B cell (primary cell): ENCODE measurements at regions of chr16 and their contacts with region 1.

Region 1: DNA sequence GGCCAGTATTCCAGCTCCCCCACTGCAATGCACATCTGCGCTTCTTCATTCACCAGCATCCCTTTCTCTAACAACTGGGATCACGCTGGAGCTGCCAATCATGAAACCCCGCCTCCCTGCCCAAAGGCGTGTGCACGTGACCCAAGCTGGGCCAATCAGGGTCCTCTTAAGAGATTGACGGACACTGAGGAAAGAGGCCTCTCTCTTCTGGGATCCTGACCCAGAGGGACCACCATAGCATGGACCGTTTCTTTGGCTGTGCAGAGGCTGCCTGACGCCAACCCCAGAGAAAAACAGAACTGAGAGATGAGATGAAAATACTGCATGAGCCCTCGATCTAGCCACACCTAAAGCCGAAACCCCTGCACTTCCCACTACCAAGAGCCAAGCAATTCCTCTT is 32.0 kb downstream of the COTL1 start:
- DNase-seq: peak; percentile 73
- ATAC-seq: peak; percentile 84
- H3K4me3 ChIP-seq: peak overlapping the region in 3 of 5 experiments; percentile 20 to 43 (median 40)
- H3K4me3 Mint-ChIP-seq: peak overlapping the region; percentile 78
- H3K27ac ChIP-seq: peak overlapping the region; percentile 37 to 41
- H3K27ac Mint-ChIP-seq: peak overlapping the region; percentile 88
- H3K4me1 ChIP-seq: peaks cover 30 to 63% of the 10 kb centered on the region in 2 donors
- H3K4me1 Mint-ChIP-seq: peaks cover 56% of the 10 kb centered on the region
- H3K27me3 ChIP-seq: no peaks in the 10 kb centered on the region
- H3K27me3 Mint-ChIP-seq: no peaks in the 10 kb centered on the region
- CTCF ChIP-seq: no peak

Region 2: GRCh38 chr16:84220851-84221250 is 365.0 kb before region 1 on chr16:
- CTCF ChIA-PET with region 1: no interaction called
- POLR2A ChIA-PET with region 1: no interaction called
- intact Hi-C with region 1: no loop called
- DNase-seq: no peak
- ATAC-seq: no peak
- H3K4me3 ChIP-seq: no peak overlapping the region
- H3K4me3 Mint-ChIP-seq: no peak overlapping the region
- H3K27ac ChIP-seq: no peak overlapping the region
- H3K27ac Mint-ChIP-seq: no peak overlapping the region
- H3K4me1 ChIP-seq: no peaks in the 10 kb centered on the region
- H3K4me1 Mint-ChIP-seq: no peaks in the 10 kb centered on the region
- H3K27me3 ChIP-seq: peaks cover 0 to 2% (median 0%) of the 10 kb centered on the region in 4 experiments
- H3K27me3 Mint-ChIP-seq: peaks cover 18% of the 10 kb centered on the region
- CTCF ChIP-seq: no peak

Region 3: GRCh38 chr16:84599521-84600202 is 13.8 kb after region 1 on chr16:
- CTCF ChIA-PET with region 1: interaction called, 7 read pairs
- POLR2A ChIA-PET with region 1: interaction called, 18 read pairs
- intact Hi-C with region 1: loop called (anchors 2 kb)
- DNase-seq: peak; percentile 77
- ATAC-seq: peak; percentile 49
- H3K4me3 ChIP-seq: peak overlapping the region; percentile 29 to 57 (median 47)
- H3K4me3 Mint-ChIP-seq: peak overlapping the region; percentile 86
- H3K27ac ChIP-seq: peak overlapping the region; percentile 86 to 91
- H3K27ac Mint-ChIP-seq: peak overlapping the region; percentile 96
- H3K4me1 ChIP-seq: peaks cover 91 to 95% of the 10 kb centered on the region in 2 donors
- H3K4me1 Mint-ChIP-seq: peaks cover 89% of the 10 kb centered on the region
- H3K27me3 ChIP-seq: no peaks in the 10 kb centered on the region
- H3K27me3 Mint-ChIP-seq: no peaks in the 10 kb centered on the region
- CTCF ChIP-seq: no peak